CD4-positive, alpha-beta T cell (primary cell): ENCODE measurements at regions of chr10 and their contacts with region 1.

Region 1: DNA sequence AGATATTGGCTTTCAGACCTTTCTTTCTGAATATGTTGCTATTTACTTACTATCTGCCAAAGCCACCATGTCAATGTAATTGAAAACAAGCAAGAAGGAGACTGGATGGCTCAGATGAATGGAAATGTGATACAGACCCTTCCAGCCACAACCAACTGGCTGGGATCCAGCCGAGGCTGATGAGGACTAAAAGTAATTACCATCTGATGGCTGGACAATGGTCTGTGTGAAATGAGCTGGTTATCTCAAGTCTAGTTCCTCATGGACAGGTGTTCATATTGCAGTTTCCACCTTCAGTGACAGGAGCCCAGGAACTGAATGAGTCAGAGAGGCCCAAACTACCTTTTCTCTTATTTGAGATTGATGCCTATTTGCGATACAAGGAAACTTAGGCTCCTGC is 267.5 kb downstream of the GATA3 start:
- DNase-seq: no peak
- ATAC-seq: no peak
- H3K4me3 ChIP-seq: no peak overlapping the region
- H3K4me3 Mint-ChIP-seq: no peak overlapping the region
- H3K27ac ChIP-seq: no peak overlapping the region
- H3K27ac Mint-ChIP-seq: no peak overlapping the region
- H3K4me1 ChIP-seq: peaks cover 8% of the 10 kb centered on the region
- H3K4me1 Mint-ChIP-seq: peaks cover 17% of the 10 kb centered on the region
- H3K27me3 ChIP-seq: no peaks in the 10 kb centered on the region
- H3K27me3 Mint-ChIP-seq: no peaks in the 10 kb centered on the region
- CTCF ChIP-seq: no peak

Region 2: DNA sequence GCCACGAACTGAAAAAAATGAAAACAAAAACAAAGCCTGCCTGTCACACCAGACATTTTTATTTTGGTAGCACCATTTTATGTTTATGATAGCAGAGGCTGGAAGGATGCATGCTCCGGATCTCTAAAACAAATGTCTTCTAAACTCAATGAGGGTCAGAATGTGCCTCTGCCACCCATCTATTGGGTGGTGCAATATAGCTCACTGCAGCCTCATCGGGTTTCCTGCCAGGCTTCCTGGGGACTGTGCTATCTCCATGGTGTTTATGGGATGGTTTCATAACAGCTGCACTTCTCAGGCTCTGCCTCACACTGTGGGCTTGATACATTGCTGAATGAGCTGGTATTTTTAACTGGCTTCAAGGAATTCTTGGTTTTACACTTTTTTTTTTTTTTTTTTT is 749.6 kb before region 1 on chr10:
- CTCF ChIA-PET with region 1: no interaction called
- POLR2A ChIA-PET with region 1: no interaction called
- intact Hi-C with region 1: no loop called
- DNase-seq: no peak
- ATAC-seq: no peak
- H3K4me3 ChIP-seq: no peak overlapping the region
- H3K4me3 Mint-ChIP-seq: no peak overlapping the region
- H3K27ac ChIP-seq: no peak overlapping the region
- H3K27ac Mint-ChIP-seq: no peak overlapping the region
- H3K4me1 ChIP-seq: no peaks in the 10 kb centered on the region
- H3K4me1 Mint-ChIP-seq: no peaks in the 10 kb centered on the region
- H3K27me3 ChIP-seq: no peaks in the 10 kb centered on the region
- H3K27me3 Mint-ChIP-seq: no peaks in the 10 kb centered on the region
- CTCF ChIP-seq: no peak

Region 3: DNA sequence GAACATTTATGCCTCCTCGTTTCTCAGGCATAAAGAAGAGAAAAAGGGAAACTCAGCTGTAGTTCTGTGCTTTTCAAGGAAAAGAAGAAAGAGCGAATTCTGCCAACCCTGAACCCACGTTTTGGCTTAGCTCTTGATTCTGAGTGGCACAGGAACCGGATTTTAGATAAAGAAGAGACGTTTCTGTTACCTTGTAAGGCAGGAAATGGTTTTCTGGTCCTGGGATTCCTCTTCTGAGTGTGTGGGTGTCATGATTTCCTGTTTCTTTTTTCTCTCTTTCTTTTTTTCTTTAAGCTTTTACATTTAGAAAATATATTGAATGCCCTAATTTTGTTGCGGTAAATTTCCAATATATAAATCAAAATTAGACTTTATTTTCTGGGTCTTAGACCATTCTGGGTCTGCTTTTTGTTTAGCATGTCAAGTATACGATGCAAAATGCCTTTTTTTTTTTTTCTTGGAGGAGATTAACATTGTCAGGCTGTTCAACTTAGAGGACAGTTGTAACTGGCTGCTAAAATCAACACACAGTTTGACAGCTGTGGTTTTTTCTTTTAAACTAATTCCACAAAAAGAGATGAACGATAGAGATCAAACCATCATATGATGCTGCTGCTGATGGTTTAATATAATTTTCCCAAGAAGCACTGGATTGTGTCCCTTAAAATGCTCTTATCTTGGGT is 76.7 kb before region 1 on chr10:
- CTCF ChIA-PET with region 1: no interaction called
- POLR2A ChIA-PET with region 1: no interaction called
- intact Hi-C with region 1: loop called in 1 of 2 experiments (anchors 5 kb)
- DNase-seq: peak in 4 of 14 experiments; percentile 37 to 81 (median 69)
- ATAC-seq: peak; percentile 90
- H3K4me3 ChIP-seq: peak overlapping the region; percentile 1
- H3K4me3 Mint-ChIP-seq: peak overlapping the region; percentile 79
- H3K27ac ChIP-seq: peak overlapping the region; percentile 32 to 72
- H3K27ac Mint-ChIP-seq: peak overlapping the region; percentile 92
- H3K4me1 ChIP-seq: peaks cover 44% of the 10 kb centered on the region
- H3K4me1 Mint-ChIP-seq: peaks cover 77% of the 10 kb centered on the region
- H3K27me3 ChIP-seq: no peaks in the 10 kb centered on the region
- H3K27me3 Mint-ChIP-seq: no peaks in the 10 kb centered on the region
- CTCF ChIP-seq: no peak

Region 4: DNA sequence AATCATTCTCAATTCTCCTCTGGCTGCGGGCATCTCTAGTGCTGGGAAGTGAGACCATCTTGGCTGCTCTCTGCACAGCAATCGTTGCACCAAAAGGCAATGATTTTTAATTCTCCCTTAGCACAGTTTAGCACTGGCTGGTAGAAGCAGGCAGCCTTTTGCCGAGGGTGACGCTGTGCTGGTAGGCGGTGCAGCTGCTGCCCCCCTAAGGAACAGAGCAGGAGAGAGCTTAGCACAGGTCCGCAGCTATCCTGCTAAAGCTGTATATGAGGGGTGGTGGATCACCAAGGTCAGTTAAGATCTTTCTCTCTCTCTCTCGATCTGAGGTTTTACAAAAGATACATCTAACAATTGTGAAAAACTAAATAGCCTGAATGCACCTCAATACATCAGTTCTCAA is 122.6 kb after region 1 on chr10:
- CTCF ChIA-PET with region 1: interaction called, 3 read pairs
- POLR2A ChIA-PET with region 1: no interaction called
- intact Hi-C with region 1: loop called in 1 of 2 experiments (anchors 5 kb)
- DNase-seq: peak; percentile 6 to 73 (median 34)
- ATAC-seq: peak; percentile 87
- H3K4me3 ChIP-seq: no peak overlapping the region
- H3K4me3 Mint-ChIP-seq: no peak overlapping the region
- H3K27ac ChIP-seq: no peak overlapping the region
- H3K27ac Mint-ChIP-seq: no peak overlapping the region
- H3K4me1 ChIP-seq: peaks cover 5% of the 10 kb centered on the region
- H3K4me1 Mint-ChIP-seq: peaks cover 15% of the 10 kb centered on the region
- H3K27me3 ChIP-seq: no peaks in the 10 kb centered on the region
- H3K27me3 Mint-ChIP-seq: no peaks in the 10 kb centered on the region
- CTCF ChIP-seq: peak; percentile 57